ENCODE measurements at regions of chr7 and their contacts with region 1.

Region 1: GRCh38 chr7:122092964-122093797 is 50.9 kb downstream of the AASS start:
- DNase-seq: peak; percentile 69
- H3K4me3 ChIP-seq: no peak overlapping the region
- H3K27ac ChIP-seq: no peak overlapping the region
- H3K4me1 ChIP-seq: no peaks in the 10 kb centered on the region
- H3K27me3 ChIP-seq: no peaks in the 10 kb centered on the region
- CTCF ChIP-seq: peak; percentile 52 to 83 (median 77)
- EP300 ChIP-seq: no peak
- POLR2A ChIP-seq: no peak

Region 2: GRCh38 chr7:121810831-121811672 is 282.1 kb before region 1 on chr7:
- in situ Hi-C with region 1: no loop called
- intact Hi-C with region 1: no loop called
- DNase-seq: no peak
- H3K4me3 ChIP-seq: no peak overlapping the region
- H3K27ac ChIP-seq: no peak overlapping the region
- H3K4me1 ChIP-seq: no peaks in the 10 kb centered on the region
- H3K27me3 ChIP-seq: no peaks in the 10 kb centered on the region
- CTCF ChIP-seq: no peak
- EP300 ChIP-seq: no peak
- POLR2A ChIP-seq: no peak

Region 3: GRCh38 chr7:122515404-122515803 is 422.2 kb after region 1 on chr7:
- in situ Hi-C with region 1: loop called in 1 of 4 experiments (anchors 25 kb)
- intact Hi-C with region 1: no loop called
- DNase-seq: no peak
- H3K4me3 ChIP-seq: no peak overlapping the region
- H3K27ac ChIP-seq: no peak overlapping the region
- H3K4me1 ChIP-seq: no peaks in the 10 kb centered on the region
- H3K27me3 ChIP-seq: no peaks in the 10 kb centered on the region
- CTCF ChIP-seq: no peak
- EP300 ChIP-seq: no peak
- POLR2A ChIP-seq: no peak

Region 4: DNA sequence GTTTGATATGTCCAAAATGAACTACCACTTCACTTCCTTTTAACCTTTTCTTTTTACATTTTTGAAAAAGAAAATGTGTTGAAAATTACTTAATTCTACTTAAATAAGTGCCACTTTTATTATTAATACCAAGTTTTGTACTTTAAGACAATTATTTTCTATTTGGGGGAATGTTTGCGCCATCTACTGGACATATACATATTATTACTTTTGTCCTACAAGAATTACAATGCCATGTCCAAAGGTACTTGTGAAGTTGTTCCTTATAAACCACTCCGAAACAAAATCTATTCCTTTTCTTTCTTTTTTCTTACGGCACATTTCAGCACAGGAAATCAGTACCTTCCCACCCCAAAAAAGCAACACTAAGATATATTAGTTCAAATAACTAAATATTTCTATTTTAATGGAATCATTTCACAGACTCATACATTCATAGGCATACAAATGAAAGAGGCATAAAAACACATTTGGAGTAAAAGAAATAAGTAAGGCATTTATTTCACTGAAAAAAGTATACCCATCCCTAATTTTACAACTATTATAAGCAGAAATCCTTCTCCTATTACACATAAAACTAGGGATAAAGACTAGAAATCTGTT is 435.8 kb after region 1 on chr7:
- in situ Hi-C with region 1: loop called in 3 of 4 experiments (anchors 25 kb)
- intact Hi-C with region 1: no loop called
- DNase-seq: no peak
- H3K4me3 ChIP-seq: no peak overlapping the region
- H3K27ac ChIP-seq: no peak overlapping the region
- H3K4me1 ChIP-seq: no peaks in the 10 kb centered on the region
- H3K27me3 ChIP-seq: no peaks in the 10 kb centered on the region
- CTCF ChIP-seq: peak; percentile 31 to 61 (median 50)
- EP300 ChIP-seq: no peak
- POLR2A ChIP-seq: no peak

Measured in transverse colon (tissue), 4 donors.